Panc1 (cell line): ENCODE measurements at regions of chr1 and their contacts with region 1.

Region 1: DNA sequence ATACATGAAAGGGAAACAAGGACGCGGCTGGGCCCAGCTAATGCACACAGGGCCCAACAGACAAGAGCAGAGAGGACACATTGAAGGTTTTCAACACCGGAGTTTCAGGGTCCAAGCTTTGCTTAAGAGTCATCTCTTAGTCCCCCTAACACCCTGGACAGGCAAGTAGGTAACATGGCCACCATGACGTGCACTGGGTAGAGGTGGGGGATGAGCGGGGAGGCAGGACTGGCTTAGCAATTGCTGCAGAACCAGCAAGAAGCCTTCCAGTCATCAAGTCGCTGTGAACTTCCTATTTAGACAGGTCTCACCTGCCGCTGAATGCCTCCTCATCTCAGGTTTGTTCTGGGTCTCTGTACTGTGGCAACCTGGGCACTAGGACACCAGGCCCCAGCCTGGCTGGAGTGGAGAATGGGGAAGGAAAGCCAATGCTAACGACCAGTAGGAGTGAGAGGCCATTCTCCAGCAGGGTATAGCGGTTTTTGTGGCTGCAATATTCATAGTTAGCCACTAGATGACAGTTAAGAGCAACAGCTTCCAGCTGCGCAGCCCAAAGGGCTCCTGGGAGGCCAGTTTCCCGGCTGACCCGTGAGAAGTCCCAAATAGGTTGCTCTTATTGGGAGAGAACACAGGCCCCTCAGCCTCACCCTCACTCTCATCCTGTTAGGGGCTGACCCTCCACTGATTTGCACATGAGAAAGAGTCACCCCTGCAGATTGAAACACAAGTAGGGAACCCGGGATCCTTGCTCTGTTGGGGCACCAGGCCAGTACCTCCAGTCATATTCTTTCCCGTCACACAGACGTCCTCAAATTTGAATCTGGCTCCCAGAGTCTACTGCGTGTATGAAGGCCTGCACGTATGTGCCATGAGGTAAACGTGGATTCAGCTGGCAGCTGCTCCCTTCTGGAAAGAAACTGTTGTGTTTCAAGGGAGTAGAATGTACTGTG is 6.0 kb upstream of the PIGC start:
- DNase-seq: peak; percentile 66
- ATAC-seq: peak; percentile 95
- H3K4me3 ChIP-seq: peak overlapping the region; percentile 7 to 29; a peak in 3 of 4 replicates
- H3K27ac ChIP-seq: peak overlapping the region; percentile 65
- H3K4me1 ChIP-seq: peaks cover 28% of the 10 kb centered on the region
- H3K27me3 ChIP-seq: no peaks in the 10 kb centered on the region
- CTCF ChIP-seq: peak; percentile 97

Region 2: DNA sequence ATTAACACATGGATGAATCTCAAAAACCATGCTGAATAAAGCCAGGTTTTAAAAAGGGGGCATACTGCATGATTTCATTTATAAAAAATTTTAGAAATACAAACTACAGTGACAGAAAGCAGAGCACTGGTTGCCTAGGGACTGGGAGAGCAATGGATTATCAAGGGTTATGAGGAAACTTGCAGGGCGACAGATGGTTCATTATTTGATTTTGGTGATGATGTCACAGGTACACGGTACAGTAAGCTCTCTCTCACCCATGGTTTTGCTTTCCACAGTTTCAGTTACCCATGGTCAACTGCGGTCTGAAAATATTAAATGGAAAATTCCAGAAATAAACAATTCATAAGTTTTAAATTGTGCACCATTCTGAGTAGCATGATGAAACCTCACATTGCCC is 722.1 kb before region 1 on chr1:
- CTCF ChIA-PET with region 1: no interaction called
- POLR2A ChIA-PET with region 1: interaction called, 13 read pairs
- in situ Hi-C with region 1: no loop called
- intact Hi-C with region 1: no loop called
- DNase-seq: no peak
- ATAC-seq: no peak
- H3K4me3 ChIP-seq: no peak overlapping the region
- H3K27ac ChIP-seq: no peak overlapping the region
- H3K4me1 ChIP-seq: no peaks in the 10 kb centered on the region
- H3K27me3 ChIP-seq: no peaks in the 10 kb centered on the region
- CTCF ChIP-seq: no peak

Region 3: GRCh38 chr1:172002725-172003345 is 447.0 kb before region 1 on chr1:
- CTCF ChIA-PET with region 1: no interaction called
- POLR2A ChIA-PET with region 1: no interaction called
- in situ Hi-C with region 1: no loop called
- intact Hi-C with region 1: loop called (anchors 5 kb)
- DNase-seq: peak; percentile 65
- ATAC-seq: peak; percentile 81
- H3K4me3 ChIP-seq: no peak overlapping the region
- H3K27ac ChIP-seq: peak overlapping the region; percentile 86; the same call in 1 of the 2 replicates
- H3K4me1 ChIP-seq: peaks cover 5% of the 10 kb centered on the region; the same call in 1 of the 2 replicates
- H3K27me3 ChIP-seq: no peaks in the 10 kb centered on the region
- CTCF ChIP-seq: peak; percentile 81; the same call in 1 of the 2 replicates

Region 4: DNA sequence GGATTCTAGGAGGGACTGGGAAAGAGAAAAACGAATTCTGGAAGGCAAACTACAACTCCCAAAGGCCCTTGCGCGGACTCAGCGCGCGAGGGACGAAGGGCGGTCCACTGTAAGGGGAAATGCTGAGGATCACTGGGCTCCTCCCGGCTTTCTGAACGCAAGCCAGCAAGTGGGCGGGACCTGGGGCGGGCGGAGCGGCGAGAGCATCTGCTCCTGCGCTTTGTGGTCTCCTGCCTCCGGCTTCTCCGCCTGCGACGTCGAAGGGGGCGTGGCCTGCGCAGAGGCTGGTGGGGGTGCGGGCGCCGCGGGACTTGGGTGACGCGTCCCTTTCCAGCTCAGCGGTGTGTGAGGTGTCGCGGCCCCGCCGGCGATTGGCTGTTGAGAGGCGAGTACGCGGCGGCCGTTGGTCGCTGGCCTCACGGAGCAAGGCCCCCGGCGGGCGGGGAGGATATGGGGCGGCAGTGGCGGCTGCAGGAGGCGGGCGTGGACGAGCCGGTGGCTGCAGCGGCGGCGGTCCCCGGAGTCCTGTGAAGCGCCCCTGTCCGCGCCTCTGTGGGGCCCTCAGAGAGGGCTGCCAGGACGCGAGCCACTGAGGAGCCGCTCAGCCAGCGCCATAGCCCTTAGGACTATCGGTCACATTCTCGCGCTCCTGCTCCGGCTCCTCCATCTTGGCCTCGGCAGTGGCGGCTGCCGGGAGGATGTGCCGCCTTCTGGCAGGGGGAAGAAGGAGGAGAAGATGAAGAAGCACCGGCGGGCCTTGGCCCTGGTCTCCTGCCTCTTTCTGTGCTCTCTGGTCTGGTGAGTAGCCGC is 83.0 kb after region 1 on chr1 and contains the start of gene SUCO:
- CTCF ChIA-PET with region 1: interaction called, 3 read pairs
- POLR2A ChIA-PET with region 1: no interaction called
- in situ Hi-C with region 1: no loop called
- intact Hi-C with region 1: loop called (anchors 5 kb)
- DNase-seq: peak; percentile 95
- ATAC-seq: peak; percentile 95
- H3K4me3 ChIP-seq: peak within 1 kb of the TSS; percentile 80 to 97
- H3K27ac ChIP-seq: peak within 1 kb of the TSS; percentile 95
- H3K4me1 ChIP-seq: peaks cover 29% of the 10 kb centered on the region
- H3K27me3 ChIP-seq: no peaks in the 10 kb centered on the region
- CTCF ChIP-seq: no peak
- total RNA-seq, gene SUCO: 31.3 TPM

Region 5: DNA sequence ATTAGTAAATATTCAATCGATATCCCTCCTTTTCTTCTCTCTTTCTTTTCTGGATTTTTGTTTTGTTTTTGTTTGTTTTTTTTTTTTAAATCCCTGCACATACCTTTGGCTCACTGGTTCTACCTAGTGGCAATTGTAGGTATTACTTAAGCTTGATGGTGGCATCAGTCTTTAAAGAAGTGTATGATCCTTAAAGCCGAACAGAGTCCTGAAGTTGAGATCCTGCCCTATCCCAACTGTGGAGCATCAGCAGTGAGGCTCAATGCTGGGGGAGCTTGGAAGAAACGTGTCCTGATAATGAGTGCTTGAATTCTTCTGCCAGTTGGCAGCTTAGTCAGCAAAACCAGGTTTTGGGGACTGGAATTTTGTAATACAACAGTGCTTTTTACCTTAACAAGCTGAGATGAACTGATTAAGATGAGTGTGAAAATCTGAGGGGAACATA is 269.9 kb after region 1 on chr1:
- CTCF ChIA-PET with region 1: interaction called, 8 read pairs
- POLR2A ChIA-PET with region 1: no interaction called
- in situ Hi-C with region 1: no loop called
- intact Hi-C with region 1: loop called (anchors 2 kb)
- DNase-seq: no peak
- ATAC-seq: peak; percentile 80
- H3K4me3 ChIP-seq: no peak overlapping the region
- H3K27ac ChIP-seq: no peak overlapping the region
- H3K4me1 ChIP-seq: no peaks in the 10 kb centered on the region
- H3K27me3 ChIP-seq: peaks cover 2% of the 10 kb centered on the region
- CTCF ChIP-seq: peak; percentile 83

Region 6: DNA sequence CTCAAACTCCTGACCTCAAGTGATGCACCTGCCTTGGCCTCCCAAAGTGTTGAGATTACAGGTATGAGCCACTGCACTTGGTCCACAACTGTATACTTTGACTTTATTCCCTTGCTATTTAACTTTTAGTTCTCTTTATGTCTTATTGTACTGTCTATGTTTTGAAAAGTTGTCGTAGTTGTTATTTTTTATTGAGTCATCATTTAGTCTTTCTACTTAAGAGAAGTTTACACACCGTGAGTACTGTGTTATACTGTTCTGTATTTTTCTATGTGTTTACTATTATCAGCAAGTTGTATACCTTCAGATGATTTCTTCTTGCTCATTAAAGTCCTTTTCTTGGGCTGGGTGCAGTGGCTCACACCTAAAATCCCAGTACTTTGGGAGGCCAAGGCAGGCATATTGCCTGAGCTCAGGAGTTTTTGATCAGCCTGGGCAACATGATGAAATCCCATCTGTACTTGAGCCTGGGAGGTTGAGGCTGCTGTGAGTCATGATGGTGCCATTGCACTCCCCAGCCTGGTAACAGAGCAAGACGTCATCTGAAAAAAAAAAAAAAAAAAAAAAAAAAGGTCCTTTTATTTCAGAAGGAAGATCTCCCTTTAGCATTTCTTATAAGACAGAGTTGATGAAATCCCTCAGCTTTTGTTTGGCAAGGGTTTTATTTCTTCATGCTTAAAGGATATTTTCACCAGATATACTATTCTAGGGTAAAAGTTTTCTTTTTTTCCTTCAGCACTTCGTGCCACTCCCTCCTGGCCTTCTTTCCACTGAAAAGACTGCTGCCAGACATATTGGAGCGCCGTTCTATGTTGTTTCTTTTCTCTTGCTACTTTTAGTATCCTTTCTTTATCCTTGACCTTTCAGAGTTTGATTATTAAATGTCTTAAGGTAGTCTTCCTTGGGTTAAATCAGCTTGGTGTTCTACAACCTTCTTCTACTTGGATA is 553.3 kb after region 1 on chr1:
- CTCF ChIA-PET with region 1: no interaction called
- POLR2A ChIA-PET with region 1: no interaction called
- in situ Hi-C with region 1: no loop called
- intact Hi-C with region 1: no loop called
- DNase-seq: no peak
- ATAC-seq: no peak
- H3K4me3 ChIP-seq: no peak overlapping the region
- H3K27ac ChIP-seq: no peak overlapping the region
- H3K4me1 ChIP-seq: no peaks in the 10 kb centered on the region
- H3K27me3 ChIP-seq: no peaks in the 10 kb centered on the region
- CTCF ChIP-seq: no peak